MCF 10A (cell line): ENCODE measurements at regions of chr7 and their contacts with region 1.

Region 1: DNA sequence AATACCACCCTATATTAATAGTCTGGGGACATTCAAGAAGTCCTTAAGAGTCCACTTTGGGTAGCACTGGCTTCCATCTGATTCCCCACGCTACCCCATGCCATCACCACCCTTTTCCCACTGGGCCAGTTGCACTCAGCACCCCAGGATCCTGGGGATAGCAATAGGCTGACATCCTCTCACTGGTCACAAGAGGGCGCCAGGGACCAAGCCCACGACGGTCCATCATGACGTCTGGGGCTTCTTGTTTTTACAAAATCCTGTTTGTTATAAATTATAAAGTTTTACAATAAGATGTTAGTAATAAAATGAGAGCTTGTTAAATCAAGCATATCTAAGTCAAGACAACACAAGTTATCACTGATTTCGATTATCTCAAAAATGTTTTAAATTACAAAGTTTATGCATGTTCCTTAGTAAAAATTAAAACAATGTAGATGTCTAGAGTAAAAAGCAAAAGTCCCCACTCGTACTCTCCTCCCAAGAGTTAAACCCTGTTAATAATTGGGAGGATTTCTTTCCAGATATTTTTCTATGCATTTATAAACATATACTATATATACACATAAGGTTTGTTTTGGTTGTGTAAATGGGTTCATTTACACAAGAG is 15.4 kb downstream of the GPNMB start:
- DNase-seq: peak; percentile 75
- H3K4me3 Mint-ChIP-seq: no peak overlapping the region
- H3K27ac Mint-ChIP-seq: no peak overlapping the region
- H3K4me1 Mint-ChIP-seq: no peaks in the 10 kb centered on the region
- H3K27me3 Mint-ChIP-seq: no peaks in the 10 kb centered on the region
- CTCF ChIP-seq: peak; percentile 83

Region 2: GRCh38 chr7:23181684-23182553 is 80.0 kb before region 1 on chr7 and contains the start of gene NUP42:
- CTCF ChIA-PET with region 1: interaction called, 11 read pairs
- POLR2A ChIA-PET with region 1: interaction called, 5 read pairs
- intact Hi-C with region 1: loop called (anchors 1 kb)
- DNase-seq: peak; percentile 98
- H3K4me3 Mint-ChIP-seq: peak within 1 kb of the TSS; percentile 90
- H3K27ac Mint-ChIP-seq: peak within 1 kb of the TSS; percentile 96
- H3K4me1 Mint-ChIP-seq: peaks cover 17% of the 10 kb centered on the region
- H3K27me3 Mint-ChIP-seq: no peaks in the 10 kb centered on the region
- CTCF ChIP-seq: no peak
- total RNA-seq, gene NUP42: 41.3 and 42.0 TPM in 2 replicates